OCI-LY7 (cell line): ENCODE measurements at regions of chr6 and their contacts with region 1.

Region 1: DNA sequence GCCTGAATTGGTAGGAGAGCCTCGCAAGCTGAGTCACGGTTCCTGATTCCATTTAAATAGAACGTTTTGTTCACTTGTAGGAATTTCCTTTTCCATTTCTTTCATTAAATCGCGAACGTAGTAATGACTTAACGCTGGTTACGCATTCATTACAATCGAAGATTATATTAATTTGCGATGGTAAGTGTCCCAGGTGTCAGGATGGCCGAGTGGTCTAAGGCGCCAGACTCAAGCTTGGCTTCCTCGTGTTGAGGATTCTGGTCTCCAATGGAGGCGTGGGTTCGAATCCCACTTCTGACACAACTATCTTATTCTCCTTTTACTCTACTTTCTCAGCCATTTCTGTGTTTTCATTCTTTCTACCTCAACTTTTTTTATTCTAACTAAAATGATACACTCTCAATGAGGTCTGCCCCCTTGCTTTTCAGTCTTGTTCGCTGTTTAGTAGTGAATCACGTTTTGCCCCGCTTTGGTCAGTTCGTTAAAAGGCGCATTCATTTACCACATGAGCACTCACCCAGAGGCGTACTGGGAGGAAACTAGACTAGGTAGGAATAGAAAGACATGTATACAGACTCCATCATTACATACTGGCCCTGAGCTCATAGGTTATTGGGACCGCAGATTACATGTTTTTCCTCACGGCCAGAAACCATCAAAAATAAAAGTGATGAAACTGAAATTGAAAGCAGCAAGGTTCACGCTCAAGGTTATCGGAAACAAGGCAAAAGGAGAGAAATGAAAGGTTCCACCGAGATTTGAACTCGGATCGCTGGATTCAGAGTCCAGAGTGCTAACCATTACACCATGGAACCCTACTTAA is 17.3 kb upstream of the TRIM27 start:
- DNase-seq: peak; percentile 57
- H3K4me3 ChIP-seq: peak overlapping the region; percentile 48
- H3K27ac ChIP-seq: no peak overlapping the region
- H3K4me1 ChIP-seq: peaks cover 35% of the 10 kb centered on the region
- CTCF ChIP-seq: no peak

Region 2: DNA sequence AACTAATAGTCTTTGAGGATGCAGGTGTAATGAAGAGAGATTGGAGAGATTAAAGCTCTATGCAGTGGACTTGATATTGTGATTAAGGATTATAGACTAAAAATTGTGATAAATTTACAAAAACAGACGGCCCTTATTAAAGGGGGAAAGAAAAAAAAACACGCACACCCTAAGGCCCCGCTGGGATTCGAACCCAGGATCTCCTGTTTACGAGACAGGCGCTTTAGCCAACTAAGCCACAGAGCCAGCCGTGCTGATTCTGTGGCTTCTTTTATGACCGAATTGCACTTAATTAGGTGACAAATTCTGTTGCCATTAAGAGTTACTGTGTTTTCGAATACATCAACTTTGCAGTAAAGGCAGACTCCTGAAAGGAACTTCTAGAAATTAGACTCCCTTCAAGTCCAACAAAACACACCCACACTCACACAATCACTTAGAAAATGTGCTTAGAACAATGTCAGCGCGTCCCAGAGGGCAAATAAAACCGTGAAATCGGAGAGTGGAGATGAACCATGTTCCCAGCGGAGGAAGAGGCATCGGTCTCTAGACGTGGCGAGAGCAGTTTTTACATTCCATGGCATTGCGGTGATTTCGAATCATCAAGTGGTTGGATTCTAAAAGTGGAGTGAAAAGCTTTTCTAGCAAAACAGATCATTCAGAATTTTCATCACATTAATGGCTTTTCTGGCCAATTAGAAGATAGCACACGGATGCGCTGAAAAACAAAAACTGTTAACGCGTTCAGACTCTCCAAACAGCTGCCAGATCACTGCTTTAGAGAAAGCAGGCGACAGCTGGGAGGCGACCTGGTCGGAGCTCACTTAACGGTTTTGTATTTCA is 292.8 kb before region 1 on chr6:
- CTCF ChIA-PET with region 1: no interaction called
- POLR2A ChIA-PET with region 1: no interaction called
- intact Hi-C with region 1: loop called (anchors 5 kb)
- DNase-seq: peak; percentile 89
- H3K4me3 ChIP-seq: peak overlapping the region; percentile 96
- H3K27ac ChIP-seq: peak overlapping the region; percentile 85
- H3K4me1 ChIP-seq: peaks cover 9% of the 10 kb centered on the region
- CTCF ChIP-seq: no peak

Region 3: DNA sequence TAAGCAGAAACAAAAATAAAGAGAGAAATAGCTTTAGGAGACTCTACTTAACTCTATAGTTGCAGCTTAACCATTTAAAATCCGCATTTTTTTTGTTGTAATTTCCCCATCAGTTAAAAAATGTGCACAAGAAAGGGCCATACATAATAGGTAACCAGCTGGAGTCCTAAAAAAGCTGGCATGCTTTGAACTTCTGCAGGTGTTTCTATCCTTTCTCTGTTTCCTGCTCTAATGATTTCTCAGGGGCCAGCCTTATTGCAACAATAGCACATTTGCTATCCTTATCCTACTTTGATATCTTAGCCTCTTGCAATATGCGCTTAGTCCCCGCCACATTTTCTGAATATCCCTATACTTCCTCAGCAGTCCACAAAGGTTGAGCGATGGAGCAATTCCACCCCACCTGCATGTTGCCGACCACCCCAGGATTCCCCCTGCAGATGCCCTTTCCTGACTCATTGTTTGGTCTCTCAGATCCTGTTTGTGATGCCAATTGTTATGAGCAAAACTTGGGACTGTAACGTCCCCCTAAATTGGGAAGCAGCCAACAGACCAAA is 65.8 kb before region 1 on chr6:
- CTCF ChIA-PET with region 1: no interaction called
- POLR2A ChIA-PET with region 1: interaction called, 10 read pairs
- intact Hi-C with region 1: no loop called
- DNase-seq: peak; percentile 90
- H3K4me3 ChIP-seq: peak overlapping the region; percentile 47
- H3K27ac ChIP-seq: peak overlapping the region; percentile 99
- H3K4me1 ChIP-seq: peaks cover 77% of the 10 kb centered on the region
- CTCF ChIP-seq: no peak

Region 4: DNA sequence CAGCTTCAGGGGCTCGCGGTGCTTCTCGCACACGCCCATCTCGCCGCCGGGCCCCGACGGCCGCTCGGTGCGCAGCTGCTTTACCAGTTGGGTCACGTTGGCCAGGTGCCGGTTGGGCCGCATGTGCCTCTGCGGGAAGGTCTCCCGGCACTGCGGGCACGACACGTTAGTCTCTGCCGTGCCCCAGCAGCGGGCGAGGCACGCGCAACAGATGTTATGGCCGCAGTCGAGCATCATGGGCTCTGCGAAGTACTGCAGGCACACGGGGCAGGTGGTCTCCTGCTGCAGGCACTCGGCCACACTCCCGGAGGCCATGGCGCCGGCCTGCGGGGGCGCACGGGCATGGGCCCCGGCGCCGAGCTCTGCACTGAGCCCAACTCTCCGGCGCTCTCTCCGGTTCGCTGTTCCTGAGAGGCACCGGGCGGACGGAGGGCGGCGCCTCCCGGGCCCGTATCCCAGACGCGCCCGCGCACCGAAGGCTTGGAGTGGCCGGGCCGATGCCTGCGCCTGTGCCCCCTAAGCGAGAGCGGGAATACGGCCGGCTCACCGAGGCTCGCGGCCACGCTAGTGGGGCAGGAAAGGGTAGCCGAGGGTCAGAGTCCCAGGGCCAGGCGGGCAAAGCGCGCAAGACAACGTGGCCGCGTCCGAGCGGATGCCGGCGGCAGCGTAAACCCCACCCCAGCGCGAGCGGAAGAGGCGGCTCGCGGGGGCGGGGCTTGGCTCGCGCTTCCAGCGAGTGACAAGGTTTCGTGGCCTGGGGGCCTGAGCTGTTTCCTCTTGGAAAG is 17.6 kb before region 1 on chr6 and contains the start of gene TRIM27:
- CTCF ChIA-PET with region 1: no interaction called
- POLR2A ChIA-PET with region 1: interaction called, 11 read pairs
- intact Hi-C with region 1: loop called (anchors 1 kb)
- DNase-seq: peak; percentile 91
- H3K4me3 ChIP-seq: peak within 1 kb of the TSS; percentile 93
- H3K27ac ChIP-seq: peak within 1 kb of the TSS; percentile 73
- H3K4me1 ChIP-seq: peaks cover 26% of the 10 kb centered on the region
- CTCF ChIP-seq: 0 out of 2 replicates have a peak, but pooled peaks have one; percentile 18
- total RNA-seq, gene TRIM27: 126 and 130 TPM in 2 replicates

Region 5: GRCh38 chr6:28981833-28982475 is 40.9 kb after region 1 on chr6:
- CTCF ChIA-PET with region 1: no interaction called
- POLR2A ChIA-PET with region 1: no interaction called
- intact Hi-C with region 1: loop called (anchors 1 kb)
- DNase-seq: peak; percentile 84
- H3K4me3 ChIP-seq: peak overlapping the region; percentile 98
- H3K27ac ChIP-seq: peak overlapping the region; percentile 37
- H3K4me1 ChIP-seq: peaks cover 22% of the 10 kb centered on the region
- CTCF ChIP-seq: 0 out of 2 replicates have a peak, but pooled peaks have one; percentile 26

Region 6: DNA sequence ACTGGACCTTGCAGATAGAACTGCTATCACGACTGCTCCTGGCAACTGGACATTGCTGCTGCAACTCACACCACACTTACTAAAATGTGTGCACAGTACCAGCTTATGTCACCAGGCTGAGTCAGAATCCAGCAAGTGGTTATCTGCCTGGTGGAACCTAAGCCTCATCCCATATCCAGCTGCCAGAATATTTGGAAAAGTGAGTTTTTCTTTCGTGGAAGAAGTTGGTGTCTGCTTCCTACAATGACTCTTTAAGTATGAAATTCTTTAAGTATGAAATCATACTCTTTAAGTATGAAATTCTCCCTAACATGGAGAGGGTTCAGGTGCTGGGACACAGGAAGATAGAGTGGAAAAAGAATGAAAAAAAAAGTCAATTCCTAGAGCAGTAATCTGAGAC is 1103.6 kb after region 1 on chr6:
- CTCF ChIA-PET with region 1: no interaction called
- POLR2A ChIA-PET with region 1: no interaction called
- intact Hi-C with region 1: no loop called
- DNase-seq: no peak
- H3K4me3 ChIP-seq: no peak overlapping the region
- H3K27ac ChIP-seq: no peak overlapping the region
- H3K4me1 ChIP-seq: no peaks in the 10 kb centered on the region
- CTCF ChIP-seq: no peak